Activated B cell treated with CpG ODN at 0.5 μM for 24 hours (primary cell): ENCODE measurements at regions of chr9 and their contacts with region 1.

Region 1: GRCh38 chr9:131627648-131628458 is 82.5 kb downstream of the PRRT1B start:
- DNase-seq: peak; percentile 55
- ATAC-seq: peak; percentile 68
- H3K4me3 Mint-ChIP-seq: peak overlapping the region; percentile 74
- H3K27ac Mint-ChIP-seq: peak overlapping the region; percentile 93
- H3K4me1 Mint-ChIP-seq: peaks cover 71% of the 10 kb centered on the region
- H3K27me3 Mint-ChIP-seq: no peaks in the 10 kb centered on the region
- CTCF ChIP-seq: no peak

Region 2: DNA sequence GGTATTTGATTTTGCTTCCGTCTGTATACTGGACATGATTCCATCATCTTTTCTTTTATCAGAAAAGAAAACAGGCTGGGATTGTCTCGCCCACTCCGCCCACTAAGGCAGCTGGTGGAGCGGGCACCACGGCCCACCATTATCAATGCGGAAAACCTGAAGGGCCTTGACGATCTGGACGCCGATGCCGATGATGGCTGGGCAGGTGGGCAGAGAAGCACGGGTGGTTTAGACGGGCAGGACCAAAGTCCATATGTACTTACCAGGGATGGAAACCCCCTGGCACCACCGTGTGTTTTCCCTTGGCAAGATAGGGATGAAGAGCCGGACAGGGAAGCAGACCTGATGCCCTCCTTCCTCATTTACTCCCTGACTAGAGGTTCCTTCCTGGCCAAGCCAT is 180.3 kb before region 1 on chr9:
- CTCF ChIA-PET with region 1: no interaction called
- POLR2A ChIA-PET with region 1: interaction called, 10 read pairs
- intact Hi-C with region 1: no loop called
- DNase-seq: no peak
- ATAC-seq: no peak
- H3K4me3 Mint-ChIP-seq: no peak overlapping the region
- H3K27ac Mint-ChIP-seq: no peak overlapping the region
- H3K4me1 Mint-ChIP-seq: no peaks in the 10 kb centered on the region
- H3K27me3 Mint-ChIP-seq: no peaks in the 10 kb centered on the region
- CTCF ChIP-seq: no peak

Region 3: DNA sequence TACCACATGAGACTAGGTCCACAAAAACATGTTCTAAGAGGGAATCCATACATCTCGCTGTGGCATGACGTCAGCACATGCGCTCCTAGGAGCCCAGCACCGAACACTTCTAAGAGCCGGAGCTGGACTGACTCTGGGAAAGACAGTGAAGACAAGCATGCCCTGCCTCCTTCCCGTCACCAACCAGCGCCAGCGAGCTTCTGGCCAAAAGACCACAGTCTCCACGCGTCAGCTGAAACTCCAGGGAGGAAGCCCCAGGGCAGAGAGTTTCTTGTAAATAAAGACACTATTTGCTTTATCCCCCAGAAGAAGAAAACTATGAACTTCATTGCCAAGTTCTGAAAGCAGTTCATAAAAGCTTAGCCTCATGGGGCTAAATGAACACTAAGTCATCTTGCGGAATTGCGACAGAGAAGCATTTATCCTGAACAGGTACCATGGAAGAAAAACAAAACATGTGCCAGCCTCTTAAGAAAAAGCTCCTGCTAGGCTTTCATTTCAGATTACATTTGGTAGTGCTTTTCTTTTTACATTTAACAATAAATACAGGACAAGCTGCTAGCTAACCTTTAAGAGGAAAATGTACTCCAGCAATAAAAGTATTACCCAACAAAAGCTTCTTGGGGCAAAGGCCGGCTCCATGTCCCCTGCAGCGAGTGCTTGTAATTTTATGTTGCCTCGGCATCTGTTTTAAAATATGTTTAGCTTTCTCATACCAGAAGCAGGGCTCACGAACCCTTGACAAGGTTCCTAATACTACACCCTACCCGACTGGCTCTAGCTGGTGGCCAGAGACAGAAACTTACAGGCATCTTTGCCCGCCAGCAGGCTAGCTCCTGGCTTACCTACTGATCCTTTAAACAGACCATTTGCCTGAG is 14.0 kb after region 1 on chr9:
- CTCF ChIA-PET with region 1: interaction called, 15 read pairs
- POLR2A ChIA-PET with region 1: interaction called, 8 read pairs
- intact Hi-C with region 1: loop called (anchors 1 kb)
- DNase-seq: no peak
- ATAC-seq: no peak
- H3K4me3 Mint-ChIP-seq: no peak overlapping the region
- H3K27ac Mint-ChIP-seq: peak overlapping the region; percentile 86
- H3K4me1 Mint-ChIP-seq: peaks cover 42% of the 10 kb centered on the region
- H3K27me3 Mint-ChIP-seq: no peaks in the 10 kb centered on the region
- CTCF ChIP-seq: no peak

Region 4: DNA sequence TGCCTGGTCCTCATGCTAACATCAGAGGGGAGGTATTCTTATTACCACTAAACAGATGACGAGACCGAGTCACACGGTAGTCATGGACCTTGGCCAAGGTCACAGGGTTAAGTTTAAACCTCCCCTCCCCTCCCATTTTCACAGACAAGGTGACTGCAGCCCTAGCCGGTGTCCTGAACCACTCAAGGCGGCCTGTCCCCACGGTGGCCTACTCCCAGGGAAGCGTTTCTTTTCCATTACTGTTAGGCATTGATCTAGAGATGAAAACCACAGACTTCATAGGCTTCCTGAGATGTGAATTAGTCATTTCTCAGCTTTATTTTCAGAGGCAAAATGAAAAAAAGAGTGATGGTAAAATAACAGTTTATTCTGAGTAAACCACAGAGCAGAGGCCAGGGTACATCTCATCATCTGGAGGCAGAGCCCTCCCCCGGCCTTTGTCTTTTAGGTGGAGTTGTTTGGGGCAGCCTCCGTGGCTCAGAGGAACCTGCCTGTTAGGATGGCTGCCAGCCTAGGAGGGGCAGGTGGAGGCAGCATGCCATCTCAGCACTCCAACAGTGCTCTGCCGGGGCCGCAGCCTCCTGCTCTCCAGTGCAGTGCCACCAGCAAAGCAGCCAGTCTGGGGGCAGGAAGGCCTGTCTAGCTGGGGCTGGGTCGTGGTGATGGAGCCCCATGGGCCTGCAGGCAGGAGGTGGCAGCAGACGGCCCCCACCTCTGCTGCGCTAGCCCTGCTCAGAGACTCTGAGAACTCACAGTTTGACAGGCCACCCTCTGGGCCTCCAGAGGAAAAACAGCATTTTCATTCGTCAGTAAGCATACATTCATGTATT is 40.8 kb after region 1 on chr9:
- CTCF ChIA-PET with region 1: interaction called, 13 read pairs
- POLR2A ChIA-PET with region 1: interaction called, 151 read pairs
- intact Hi-C with region 1: loop called (anchors 2 kb)
- DNase-seq: no peak
- ATAC-seq: peak; percentile 61
- H3K4me3 Mint-ChIP-seq: peak overlapping the region; percentile 78
- H3K27ac Mint-ChIP-seq: peak overlapping the region; percentile 93
- H3K4me1 Mint-ChIP-seq: peaks cover 99% of the 10 kb centered on the region
- H3K27me3 Mint-ChIP-seq: no peaks in the 10 kb centered on the region
- CTCF ChIP-seq: no peak

Region 5: DNA sequence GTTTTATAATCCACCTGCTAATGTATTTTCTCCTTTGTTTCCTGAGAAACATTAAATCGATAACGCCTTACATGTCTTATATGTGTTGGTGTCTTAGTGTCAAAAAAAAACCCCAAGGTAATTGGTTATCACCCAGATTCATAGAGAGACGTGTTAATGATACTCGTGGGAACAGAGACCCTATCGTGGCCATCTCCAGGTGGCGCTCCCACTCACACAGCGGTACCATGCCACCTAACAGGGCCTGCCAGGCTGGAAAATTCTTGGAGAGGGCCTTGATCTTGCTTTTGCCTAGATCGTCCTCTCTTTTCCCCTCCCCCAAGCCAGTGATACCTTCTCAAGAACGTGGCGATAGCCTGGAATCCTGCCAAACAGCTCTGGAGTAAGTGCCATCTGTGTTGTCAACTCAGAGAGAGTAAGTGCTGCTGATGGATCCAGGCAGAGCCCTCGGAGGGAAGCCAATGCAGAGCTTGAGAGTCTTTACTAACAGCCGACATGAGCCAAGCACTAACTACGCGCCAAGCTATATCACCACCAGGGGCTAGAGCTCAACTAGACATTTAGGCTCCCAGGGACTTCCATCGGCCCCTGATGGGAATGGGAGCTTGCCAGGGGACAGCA is 94.3 kb after region 1 on chr9:
- CTCF ChIA-PET with region 1: interaction called, 15 read pairs
- POLR2A ChIA-PET with region 1: interaction called, 567 read pairs
- intact Hi-C with region 1: no loop called
- DNase-seq: no peak
- ATAC-seq: no peak
- H3K4me3 Mint-ChIP-seq: no peak overlapping the region
- H3K27ac Mint-ChIP-seq: peak overlapping the region; percentile 35
- H3K4me1 Mint-ChIP-seq: peaks cover 94% of the 10 kb centered on the region
- H3K27me3 Mint-ChIP-seq: no peaks in the 10 kb centered on the region
- CTCF ChIP-seq: no peak

Region 6: GRCh38 chr9:131747356-131747755 is 119.5 kb after region 1 on chr9:
- CTCF ChIA-PET with region 1: interaction called, 24 read pairs
- POLR2A ChIA-PET with region 1: interaction called, 567 read pairs
- intact Hi-C with region 1: no loop called
- DNase-seq: no peak
- ATAC-seq: peak; percentile 55
- H3K4me3 Mint-ChIP-seq: no peak overlapping the region
- H3K27ac Mint-ChIP-seq: no peak overlapping the region
- H3K4me1 Mint-ChIP-seq: peaks cover 27% of the 10 kb centered on the region
- H3K27me3 Mint-ChIP-seq: no peaks in the 10 kb centered on the region
- CTCF ChIP-seq: no peak

Region 7: GRCh38 chr9:131910572-131910971 is 282.7 kb after region 1 on chr9:
- CTCF ChIA-PET with region 1: no interaction called
- POLR2A ChIA-PET with region 1: no interaction called
- intact Hi-C with region 1: no loop called
- DNase-seq: no peak
- ATAC-seq: no peak
- H3K4me3 Mint-ChIP-seq: no peak overlapping the region
- H3K27ac Mint-ChIP-seq: no peak overlapping the region
- H3K4me1 Mint-ChIP-seq: no peaks in the 10 kb centered on the region
- H3K27me3 Mint-ChIP-seq: no peaks in the 10 kb centered on the region
- CTCF ChIP-seq: no peak